Heart left ventricle (tissue), 16 donors: ENCODE measurements at regions of chr6 and their contacts with region 1.

Region 1: DNA sequence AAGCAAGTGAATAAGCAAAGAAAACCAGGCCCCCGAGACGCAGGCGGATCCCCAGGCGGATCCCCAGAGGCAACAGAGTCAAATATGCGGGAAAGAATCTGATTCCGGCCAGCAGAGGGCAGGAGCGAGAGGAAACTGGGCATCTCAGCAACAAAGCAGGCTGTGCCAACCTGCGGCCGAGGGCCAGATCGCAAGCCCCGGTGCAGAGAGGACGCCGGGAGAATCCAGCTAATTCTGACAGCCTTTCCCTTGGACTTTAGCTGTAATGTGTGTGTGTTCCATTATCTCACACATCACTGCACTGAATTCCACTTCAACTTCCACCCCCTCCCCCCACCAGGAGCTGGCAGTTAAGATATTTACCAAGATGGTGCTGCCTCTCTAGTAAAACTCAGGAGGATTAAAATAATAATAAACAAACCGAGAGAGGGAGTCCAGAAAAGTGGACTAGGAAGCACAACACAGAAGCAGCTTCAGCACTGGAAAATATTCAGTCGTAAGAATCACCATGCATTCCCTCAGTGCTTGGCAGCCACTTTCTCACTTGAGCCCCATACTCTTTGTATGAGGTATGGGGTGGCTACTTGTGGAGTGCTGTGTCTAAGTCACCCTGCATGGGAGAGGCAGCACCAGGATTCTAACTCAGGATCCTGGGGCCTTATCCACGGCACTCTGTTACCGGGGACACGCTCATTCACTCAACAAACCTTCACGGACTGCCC is 66.2 kb upstream of the SNX9 start:
- DNase-seq: peak; percentile 85 to 92 (median 87)
- ATAC-seq: peak; percentile 84 to 91 (median 88)
- H3K4me3 ChIP-seq: peak overlapping the region in 1 of 12 donors; percentile 4
- H3K27ac ChIP-seq: peak overlapping the region in 3 of 12 donors; percentile 8 to 48 (median 45)
- H3K4me1 ChIP-seq: peaks cover 0 to 42% (median 13%) of the 10 kb centered on the region in 12 donors
- H3K27me3 ChIP-seq: no peaks in the 10 kb centered on the region
- CTCF ChIP-seq: peak; percentile 77 to 88 (median 82)
- POLR2A ChIP-seq: no peak

Region 2: GRCh38 chr6:157632821-157633220 is 124.0 kb before region 1 on chr6:
- intact Hi-C with region 1: no loop called
- DNase-seq: no peak
- ATAC-seq: no peak
- H3K4me3 ChIP-seq: no peak overlapping the region
- H3K27ac ChIP-seq: no peak overlapping the region
- H3K4me1 ChIP-seq: no peaks in the 10 kb centered on the region
- H3K27me3 ChIP-seq: no peaks in the 10 kb centered on the region
- CTCF ChIP-seq: no peak
- POLR2A ChIP-seq: no peak

Region 3: GRCh38 chr6:157864185-157864761 is 107.4 kb after region 1 on chr6:
- intact Hi-C with region 1: no loop called
- DNase-seq: no peak
- ATAC-seq: no peak
- H3K4me3 ChIP-seq: no peak overlapping the region
- H3K27ac ChIP-seq: no peak overlapping the region
- H3K4me1 ChIP-seq: peaks cover 0 to 70% (median 44%) of the 10 kb centered on the region in 12 donors
- H3K27me3 ChIP-seq: no peaks in the 10 kb centered on the region
- CTCF ChIP-seq: no peak
- POLR2A ChIP-seq: no peak

Region 4: DNA sequence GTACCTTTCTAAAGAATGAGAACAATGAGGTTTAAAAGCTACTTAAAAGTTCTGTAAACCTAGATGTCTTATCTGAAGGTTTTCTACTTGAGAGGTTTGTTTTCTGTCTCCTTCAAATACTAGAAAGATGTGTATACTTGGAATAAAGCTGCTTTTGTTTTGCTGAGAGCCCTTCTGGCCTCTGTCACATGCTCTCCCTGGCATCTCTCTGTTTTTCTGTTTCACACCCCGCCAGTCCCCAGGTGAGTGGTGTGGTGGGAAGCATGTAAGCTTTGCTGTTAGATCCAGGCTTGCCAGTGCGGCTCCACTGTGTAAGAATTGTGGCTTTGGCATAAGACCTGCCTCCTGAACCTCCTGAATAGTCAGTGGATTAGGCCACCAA is 123.0 kb after region 1 on chr6:
- intact Hi-C with region 1: loop called in 1 of 10 experiments (anchors 5 kb)
- DNase-seq: no peak
- ATAC-seq: no peak
- H3K4me3 ChIP-seq: no peak overlapping the region
- H3K27ac ChIP-seq: no peak overlapping the region
- H3K4me1 ChIP-seq: peaks cover 0 to 12% (median 1%) of the 10 kb centered on the region in 12 donors
- H3K27me3 ChIP-seq: no peaks in the 10 kb centered on the region
- CTCF ChIP-seq: no peak
- POLR2A ChIP-seq: no peak

Region 5: DNA sequence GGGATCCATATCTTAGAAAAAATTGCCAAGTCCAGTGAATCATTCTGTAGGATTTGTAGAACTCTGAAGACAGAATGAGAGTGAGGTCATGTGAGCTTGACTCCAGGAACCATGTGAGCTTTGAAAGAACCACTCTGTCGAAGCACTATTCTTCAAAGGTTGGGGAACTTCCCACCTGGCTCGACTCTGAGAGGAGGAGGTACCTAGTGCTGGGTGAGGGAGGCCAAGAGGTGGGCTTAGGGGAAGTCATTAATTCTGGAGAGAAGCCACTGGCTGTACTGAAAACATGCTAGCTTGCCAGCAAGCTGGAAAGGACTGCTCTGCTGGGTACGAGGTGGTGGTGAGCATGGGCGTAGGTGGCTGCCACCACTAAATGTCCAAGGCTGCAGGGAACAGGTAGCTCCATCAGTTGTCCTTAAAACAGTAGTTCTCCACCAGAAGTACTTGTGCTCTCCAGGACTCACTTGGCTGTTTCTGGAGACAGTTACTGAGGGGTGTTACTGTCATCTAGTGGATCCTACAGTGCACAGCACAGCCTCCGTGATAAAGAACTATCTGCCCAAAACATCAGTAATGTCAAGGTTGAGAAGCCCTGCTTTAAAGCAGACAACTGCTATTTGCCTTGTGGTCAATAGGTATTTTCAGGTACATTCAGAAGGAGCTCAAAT is 190.1 kb after region 1 on chr6:
- intact Hi-C with region 1: loop called in 1 of 10 experiments (anchors 10 kb)
- DNase-seq: no peak
- ATAC-seq: peak in 3 of 4 donors; percentile 62 to 65 (median 64)
- H3K4me3 ChIP-seq: no peak overlapping the region
- H3K27ac ChIP-seq: no peak overlapping the region
- H3K4me1 ChIP-seq: peaks cover 0 to 3% (median 0%) of the 10 kb centered on the region in 12 donors
- H3K27me3 ChIP-seq: no peaks in the 10 kb centered on the region
- CTCF ChIP-seq: peak in 9 of 12 donors; percentile 32 to 61 (median 44)
- POLR2A ChIP-seq: no peak